GM12878 (cell line): ENCODE measurements at regions of chr2 and their contacts with region 1.

Region 1: DNA sequence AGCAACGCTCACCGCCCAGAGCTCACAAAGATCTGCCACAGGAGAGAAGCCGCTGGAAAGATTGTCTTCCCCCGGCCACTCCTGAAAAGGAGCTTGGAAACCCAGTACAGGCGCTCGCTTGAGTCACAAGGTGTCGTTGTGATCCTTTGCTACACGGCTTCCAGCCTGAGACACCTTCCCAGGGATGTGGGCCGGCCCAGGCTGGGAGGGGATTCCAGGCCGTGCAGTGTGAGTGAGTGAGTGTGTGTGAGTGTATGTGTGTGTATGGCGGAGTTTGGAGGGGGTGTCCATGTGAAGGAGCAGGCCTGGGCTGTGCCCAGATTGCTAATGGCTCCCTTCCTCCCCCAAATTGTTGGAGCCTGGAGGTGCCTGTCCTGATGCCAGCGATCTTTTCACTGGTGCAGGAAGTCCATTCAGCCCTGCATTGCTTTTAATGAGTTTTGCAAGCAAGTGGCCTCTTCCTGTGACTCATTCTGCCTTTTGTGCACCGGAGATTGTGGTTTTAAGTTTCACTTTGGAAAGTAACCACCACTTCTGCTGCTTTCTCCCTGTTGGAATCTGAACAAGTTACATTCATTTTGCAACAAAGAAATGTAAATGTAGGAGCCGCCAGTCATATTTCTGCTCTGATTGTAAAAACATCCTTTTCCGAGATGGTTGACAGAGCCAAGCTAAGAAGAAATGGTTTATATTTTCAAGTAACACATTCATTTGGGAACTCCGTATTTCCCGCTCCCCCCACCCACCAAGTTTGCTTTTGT is 83.7 kb downstream of the LPIN1 start:
- DNase-seq: peak; percentile 96
- ATAC-seq: peak; percentile 84
- H3K4me3 ChIP-seq: peak overlapping the region; percentile 38; the same call in 1 of the 2 replicates
- H3K27ac ChIP-seq: peak overlapping the region; percentile 78
- H3K4me1 ChIP-seq: peaks cover 27% of the 10 kb centered on the region
- H3K27me3 ChIP-seq: 0 out of 4 replicates have a peak, but pooled peaks cover 0 to 2% of the 10 kb centered on the region in 2 experiments
- CTCF ChIP-seq: peak in 2 of 3 experiments; percentile 7 to 58; a peak in 3 of 6 replicates
- EP300 ChIP-seq: peak; percentile 88 to 97; a peak in 3 of 4 replicates
- POLR2A ChIP-seq: no peak
- RAD21 ChIP-seq: peak; percentile 54

Region 2: GRCh38 chr2:11850082-11850481 is 20.0 kb after region 1 on chr2:
- CTCF ChIA-PET with region 1: no interaction called
- POLR2A ChIA-PET with region 1: no interaction called
- RAD21 ChIA-PET with region 1: no interaction called
- SMC1A ChIA-PET with region 1: no interaction called
- in situ Hi-C with region 1: no loop called
- intact Hi-C with region 1: no loop called
- DNase-seq: no peak
- ATAC-seq: no peak
- H3K4me3 ChIP-seq: no peak overlapping the region
- H3K27ac ChIP-seq: no peak overlapping the region
- H3K4me1 ChIP-seq: peaks cover 7% of the 10 kb centered on the region
- H3K27me3 ChIP-seq: no peaks in the 10 kb centered on the region
- CTCF ChIP-seq: no peak
- EP300 ChIP-seq: no peak
- POLR2A ChIP-seq: no peak
- RAD21 ChIP-seq: no peak

Region 3: DNA sequence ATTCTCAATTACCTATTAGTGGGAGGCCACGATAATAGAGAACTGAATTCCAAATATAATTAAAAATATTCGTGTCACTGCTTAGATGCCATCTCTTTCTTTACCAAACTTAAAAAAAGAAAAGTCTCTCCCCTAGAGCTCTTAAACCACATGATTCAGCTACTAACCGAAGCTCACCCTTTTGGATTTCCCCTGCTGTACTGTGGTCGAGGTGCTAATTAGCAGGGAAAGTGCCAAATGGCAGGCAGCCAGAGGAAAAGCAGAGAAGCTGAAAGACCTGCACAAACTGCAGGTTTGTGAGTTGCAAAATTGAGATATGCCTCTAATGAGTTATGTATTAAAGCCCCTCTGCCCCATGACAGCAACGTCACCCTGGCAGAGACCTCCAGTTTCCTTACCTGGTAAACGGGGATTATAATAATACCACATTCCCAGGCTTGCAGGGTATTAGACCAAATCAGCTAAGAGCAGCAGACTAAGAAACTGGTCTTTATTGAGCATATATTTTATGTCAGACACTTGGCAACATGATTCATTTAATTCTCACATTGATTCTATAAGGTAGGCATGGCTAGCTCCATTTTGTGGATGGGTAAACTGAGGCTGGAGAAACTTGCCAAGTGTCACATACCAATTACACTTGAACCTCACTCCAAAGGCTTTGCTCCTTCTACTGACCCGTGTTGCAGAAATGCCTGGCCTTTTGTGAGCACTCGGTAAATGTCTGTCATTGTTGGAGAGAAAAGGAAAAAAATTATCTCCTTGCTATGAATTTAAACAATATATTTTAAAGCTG is 176.0 kb after region 1 on chr2:
- CTCF ChIA-PET with region 1: interaction called, 14 read pairs
- POLR2A ChIA-PET with region 1: no interaction called
- RAD21 ChIA-PET with region 1: interaction called, 13 read pairs
- SMC1A ChIA-PET with region 1: interaction called, 8 read pairs
- in situ Hi-C with region 1: no loop called
- intact Hi-C with region 1: loop called (anchors 1 kb)
- DNase-seq: peak; percentile 89
- ATAC-seq: peak; percentile 84
- H3K4me3 ChIP-seq: no peak overlapping the region
- H3K27ac ChIP-seq: peak overlapping the region; percentile 71; the same call in 1 of the 2 replicates
- H3K4me1 ChIP-seq: peaks cover 61% of the 10 kb centered on the region
- H3K27me3 ChIP-seq: no peaks in the 10 kb centered on the region
- CTCF ChIP-seq: no peak
- EP300 ChIP-seq: peak; percentile 93 to 95
- POLR2A ChIP-seq: no peak
- RAD21 ChIP-seq: no peak

Region 4: DNA sequence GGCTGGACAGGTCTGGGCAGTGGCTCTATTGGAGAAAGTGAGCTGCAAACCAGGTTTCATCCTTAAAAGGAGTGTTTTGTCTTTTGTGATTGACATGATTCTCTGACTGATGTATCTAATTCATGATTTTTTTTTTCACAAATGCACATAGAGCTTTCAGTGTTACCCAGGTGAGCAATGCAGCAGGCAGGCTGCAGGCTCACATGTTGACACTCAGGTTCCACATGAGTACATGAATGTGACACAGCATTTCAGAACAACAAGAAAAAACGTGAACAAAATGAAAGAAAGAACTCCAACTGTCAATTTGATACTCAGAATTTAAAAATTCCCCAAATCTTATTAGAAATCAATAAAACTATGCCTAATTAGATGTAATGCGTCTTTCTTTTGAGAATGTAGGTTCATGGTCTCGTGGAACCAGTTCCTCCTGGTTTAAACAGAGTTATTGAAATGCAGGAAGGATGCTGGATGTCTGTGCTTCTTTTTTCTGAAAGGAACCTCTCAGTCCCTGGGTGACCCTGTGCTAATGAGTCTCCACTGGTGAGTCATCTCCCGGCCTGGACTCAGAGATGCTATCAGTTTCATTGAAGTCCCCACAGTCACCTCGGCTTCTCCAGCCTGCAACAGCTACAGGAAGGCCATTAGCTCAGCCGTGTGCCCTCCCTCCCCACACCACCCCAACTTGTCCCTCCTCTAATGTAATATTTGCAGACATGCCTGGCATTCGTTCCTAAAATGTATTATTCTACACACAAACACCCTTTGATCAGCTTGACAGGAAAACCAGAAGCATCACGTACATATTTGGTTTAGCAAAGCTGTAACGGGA is 346.7 kb after region 1 on chr2:
- CTCF ChIA-PET with region 1: no interaction called
- POLR2A ChIA-PET with region 1: no interaction called
- RAD21 ChIA-PET with region 1: no interaction called
- SMC1A ChIA-PET with region 1: interaction called, 4 read pairs
- in situ Hi-C with region 1: no loop called
- intact Hi-C with region 1: loop called (anchors 10 kb)
- DNase-seq: peak; percentile 45
- ATAC-seq: peak; percentile 97
- H3K4me3 ChIP-seq: no peak overlapping the region
- H3K27ac ChIP-seq: no peak overlapping the region
- H3K4me1 ChIP-seq: peaks cover 10% of the 10 kb centered on the region
- H3K27me3 ChIP-seq: no peaks in the 10 kb centered on the region
- CTCF ChIP-seq: no peak
- EP300 ChIP-seq: no peak
- POLR2A ChIP-seq: no peak
- RAD21 ChIP-seq: no peak

Region 5: DNA sequence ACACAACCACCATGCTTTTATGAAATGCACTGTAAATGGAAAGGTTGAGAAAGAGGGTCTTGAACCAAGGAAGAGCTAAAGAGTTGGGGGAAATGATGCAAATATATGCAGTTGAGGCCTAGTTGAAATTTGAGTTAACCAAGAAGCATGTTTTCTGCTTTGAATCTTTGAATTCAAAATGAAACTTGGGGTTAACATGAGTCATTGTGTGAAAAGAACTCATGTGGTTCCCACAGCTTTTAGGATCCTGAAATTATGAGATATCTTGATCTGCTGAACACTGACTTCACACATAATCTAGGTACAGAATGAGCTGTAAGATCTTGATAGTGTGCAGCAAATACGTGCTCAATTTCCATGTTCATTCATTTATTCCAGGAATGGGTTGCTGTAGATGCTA is 463.7 kb after region 1 on chr2:
- CTCF ChIA-PET with region 1: interaction called, 3 read pairs
- POLR2A ChIA-PET with region 1: no interaction called
- RAD21 ChIA-PET with region 1: no interaction called
- SMC1A ChIA-PET with region 1: no interaction called
- in situ Hi-C with region 1: loop called (anchors 25 kb)
- intact Hi-C with region 1: loop called (anchors 5 kb)
- DNase-seq: peak; percentile 84
- ATAC-seq: peak; percentile 99
- H3K4me3 ChIP-seq: no peak overlapping the region
- H3K27ac ChIP-seq: peak overlapping the region; percentile 58
- H3K4me1 ChIP-seq: peaks cover 13% of the 10 kb centered on the region
- H3K27me3 ChIP-seq: no peaks in the 10 kb centered on the region
- CTCF ChIP-seq: no peak
- EP300 ChIP-seq: peak; percentile 42 to 96; a peak in 3 of 4 replicates
- POLR2A ChIP-seq: no peak
- RAD21 ChIP-seq: no peak

Region 6: GRCh38 chr2:12716282-12717190 is 886.4 kb after region 1 on chr2 and contains the start of gene TRIB2:
- CTCF ChIA-PET with region 1: interaction called, 65 read pairs
- POLR2A ChIA-PET with region 1: no interaction called
- RAD21 ChIA-PET with region 1: interaction called, 48 read pairs
- SMC1A ChIA-PET with region 1: interaction called, 48 read pairs
- in situ Hi-C with region 1: loop called (anchors 5 kb)
- intact Hi-C with region 1: loop called (anchors 1 kb)
- DNase-seq: no peak
- ATAC-seq: peak; percentile 85
- H3K4me3 ChIP-seq: peak within 1 kb of the TSS; percentile 87
- H3K27ac ChIP-seq: no peak within 1 kb of the TSS
- H3K4me1 ChIP-seq: peaks cover 3% of the 10 kb centered on the region; the same call in 1 of the 2 replicates
- H3K27me3 ChIP-seq: peaks cover 0 to 18% of the 10 kb centered on the region in 2 experiments; a peak in 3 of 4 replicates
- CTCF ChIP-seq: peak in 2 of 3 experiments; percentile 12 to 35; a peak in 2 of 6 replicates
- EP300 ChIP-seq: no peak
- POLR2A ChIP-seq: peak; percentile 54
- RAD21 ChIP-seq: 0 out of 2 replicates have a peak, but pooled peaks have one; percentile 34
- polyA plus RNA-seq, gene TRIB2: 1.6 to 3.5 TPM